Mammary epithelial cell (primary cell): ENCODE measurements at regions of chr4 and their contacts with region 1.

Region 1: GRCh38 chr4:43132010-43132582 is 239.6 kb downstream of the GRXCR1 start:
- DNase-seq: peak; percentile 52
- H3K4me3 ChIP-seq: no peak overlapping the region
- H3K27ac ChIP-seq: no peak overlapping the region
- H3K4me1 ChIP-seq: peaks cover 4% of the 10 kb centered on the region
- H3K27me3 ChIP-seq: no peaks in the 10 kb centered on the region
- CTCF ChIP-seq: peak; percentile 82 to 89

Region 2: DNA sequence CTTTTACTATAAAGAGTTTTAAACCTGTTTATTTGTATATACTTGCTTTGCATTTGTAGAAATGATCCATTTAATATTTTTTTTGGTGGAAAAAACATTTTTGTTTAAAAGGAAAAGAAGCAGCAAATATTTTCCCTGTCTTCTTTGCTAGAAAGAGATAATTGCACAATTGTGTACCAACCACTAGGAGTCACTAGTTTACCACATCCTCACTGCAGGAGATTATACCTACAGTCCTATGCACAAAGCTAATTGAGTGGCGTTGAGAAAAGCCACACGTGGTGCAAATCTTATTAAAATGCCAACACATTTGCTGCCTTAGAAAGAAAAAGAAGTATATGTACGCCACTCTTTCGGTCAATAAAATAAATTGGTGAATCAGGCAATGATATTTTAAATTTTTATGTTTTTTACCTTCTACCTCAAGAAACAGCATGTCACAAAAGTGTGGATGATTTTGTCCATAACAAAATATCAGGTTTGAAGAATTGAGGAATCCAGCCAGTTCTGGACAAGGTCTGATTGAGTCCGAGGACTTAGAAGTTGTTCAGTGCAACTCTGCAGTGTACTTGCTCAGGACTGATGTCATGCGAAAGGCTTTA is 136.7 kb before region 1 on chr4:
- CTCF ChIA-PET with region 1: no interaction called
- dilution Hi-C with region 1: no loop called
- in situ Hi-C with region 1: no loop called
- intact Hi-C with region 1: loop called (anchors 2 kb)
- DNase-seq: peak; percentile 6
- H3K4me3 ChIP-seq: no peak overlapping the region
- H3K27ac ChIP-seq: no peak overlapping the region
- H3K4me1 ChIP-seq: no peaks in the 10 kb centered on the region
- H3K27me3 ChIP-seq: no peaks in the 10 kb centered on the region
- CTCF ChIP-seq: peak; percentile 81 to 87

Region 3: GRCh38 chr4:43471950-43472349 is 339.9 kb after region 1 on chr4:
- CTCF ChIA-PET with region 1: no interaction called
- dilution Hi-C with region 1: no loop called
- in situ Hi-C with region 1: no loop called
- intact Hi-C with region 1: loop called (anchors 1 kb)
- DNase-seq: no peak
- H3K4me3 ChIP-seq: no peak overlapping the region
- H3K27ac ChIP-seq: no peak overlapping the region
- H3K4me1 ChIP-seq: no peaks in the 10 kb centered on the region
- H3K27me3 ChIP-seq: no peaks in the 10 kb centered on the region
- CTCF ChIP-seq: peak in 1 of 2 donors; percentile 13

Region 4: GRCh38 chr4:43776371-43776770 is 644.3 kb after region 1 on chr4:
- CTCF ChIA-PET with region 1: no interaction called
- dilution Hi-C with region 1: no loop called
- in situ Hi-C with region 1: no loop called
- intact Hi-C with region 1: loop called (anchors 5 kb)
- DNase-seq: no peak
- H3K4me3 ChIP-seq: no peak overlapping the region
- H3K27ac ChIP-seq: no peak overlapping the region
- H3K4me1 ChIP-seq: no peaks in the 10 kb centered on the region
- H3K27me3 ChIP-seq: no peaks in the 10 kb centered on the region
- CTCF ChIP-seq: peak; percentile 14 to 28